GM13976 (cell line): ENCODE measurements at regions of chr4 and their contacts with region 1.

Region 1: DNA sequence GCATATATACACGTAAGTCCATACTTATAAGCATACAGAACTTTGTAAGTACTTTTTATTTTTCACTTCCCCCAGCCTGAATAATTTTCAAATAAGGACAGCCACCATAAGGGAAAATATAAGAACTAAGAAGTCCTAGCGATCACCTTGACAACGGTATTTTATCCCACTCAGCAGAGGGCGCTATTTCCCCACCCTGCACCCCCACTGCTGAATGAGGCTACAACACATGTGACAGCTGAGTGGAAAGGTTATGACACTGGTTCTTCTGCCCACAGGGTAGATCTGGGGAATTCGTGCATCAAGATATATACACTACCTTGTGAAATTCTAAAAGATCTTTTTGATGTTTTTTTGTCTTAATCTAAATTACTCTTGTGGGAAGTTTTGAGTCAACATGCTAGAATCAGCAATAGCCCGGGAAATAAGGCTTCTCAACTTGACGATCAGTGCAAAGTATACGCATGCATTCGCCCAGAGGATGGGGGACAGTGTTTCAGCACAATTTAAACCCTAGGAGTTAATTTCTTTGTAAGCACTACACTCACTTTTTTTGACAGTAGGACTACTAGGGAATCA is 151.5 kb downstream of the CORIN start:
- DNase-seq: peak; percentile 51
- CTCF ChIP-seq: peak; percentile 73

Region 2: DNA sequence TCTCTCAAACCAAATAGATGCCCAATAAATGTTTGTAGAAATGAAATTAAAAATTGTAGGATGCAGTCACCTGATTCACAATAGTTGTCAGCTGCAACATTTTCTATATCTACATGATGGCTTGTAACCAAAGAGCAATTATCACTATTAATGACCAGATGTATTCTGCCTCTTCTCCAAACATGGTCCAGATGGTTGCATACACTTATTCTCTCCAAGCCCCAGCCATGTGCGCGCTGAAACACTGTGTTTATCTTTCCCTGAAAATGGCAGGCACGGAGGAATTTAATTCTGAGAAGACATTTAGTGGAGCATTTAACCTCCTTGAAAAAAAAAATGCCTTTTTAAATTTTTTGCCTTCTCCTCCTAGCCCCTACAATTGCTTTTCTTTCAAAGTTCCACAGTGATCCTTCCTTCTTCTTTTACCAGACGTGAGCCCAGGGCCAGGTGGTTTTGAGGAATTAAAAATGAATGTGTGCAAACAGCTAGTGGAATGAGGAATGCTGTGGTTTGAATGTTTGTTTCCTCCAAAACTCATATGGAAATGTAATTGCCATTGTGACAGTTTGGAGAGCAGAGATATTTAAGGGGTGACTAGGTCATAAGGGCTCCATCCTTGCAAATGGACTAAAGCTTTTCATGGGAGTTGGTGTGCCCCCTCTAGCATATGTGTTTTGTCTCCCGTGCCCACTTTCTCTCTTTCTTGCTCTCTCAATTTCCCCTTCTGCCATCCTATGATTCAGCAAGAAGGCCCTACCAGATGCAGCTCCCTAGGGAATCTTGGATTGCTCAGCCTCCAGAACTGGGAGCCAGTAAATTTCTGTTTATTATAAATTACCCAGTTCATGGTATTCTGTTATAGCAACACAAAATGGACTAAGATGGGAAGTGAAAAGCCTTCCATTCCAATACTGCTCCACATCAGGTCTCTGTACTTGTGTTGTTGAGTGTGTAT is 519.0 kb before region 1 on chr4:
- in situ Hi-C with region 1: no loop called
- DNase-seq: no peak
- CTCF ChIP-seq: no peak

Region 3: DNA sequence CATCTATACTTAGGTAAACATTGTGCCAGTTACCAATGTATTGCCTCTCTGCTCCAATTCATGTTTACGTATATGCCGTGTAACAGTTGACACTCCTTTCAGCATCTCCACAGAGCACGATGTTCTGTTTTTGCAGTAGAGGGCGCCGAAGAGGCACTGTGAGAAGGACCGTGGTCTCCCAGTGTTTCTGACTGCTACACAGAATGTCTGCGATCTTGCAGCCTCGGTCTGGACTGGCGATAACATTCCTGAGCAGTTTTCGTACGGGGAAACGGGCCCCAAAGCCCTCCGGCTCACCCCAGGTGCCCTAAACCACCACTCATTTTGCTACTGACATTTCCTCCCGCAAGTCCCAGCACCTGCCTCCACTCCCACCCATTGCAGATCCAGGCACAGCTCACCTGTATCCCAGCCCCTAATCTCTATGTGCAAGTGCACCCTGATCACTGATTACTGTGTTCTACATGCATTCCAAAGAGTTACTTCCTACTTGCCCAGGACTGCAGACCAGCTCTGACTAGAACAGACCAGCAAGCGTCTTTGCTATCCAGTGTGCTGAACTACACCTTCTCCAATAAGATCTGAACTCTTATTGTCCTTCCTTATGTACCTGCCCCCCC is 240.4 kb after region 1 on chr4:
- in situ Hi-C with region 1: loop called (anchors 10 kb)
- DNase-seq: peak; percentile 50
- CTCF ChIP-seq: peak; percentile 78